ENCODE measurements at regions of chr19 and their contacts with region 1.

Region 1: DNA sequence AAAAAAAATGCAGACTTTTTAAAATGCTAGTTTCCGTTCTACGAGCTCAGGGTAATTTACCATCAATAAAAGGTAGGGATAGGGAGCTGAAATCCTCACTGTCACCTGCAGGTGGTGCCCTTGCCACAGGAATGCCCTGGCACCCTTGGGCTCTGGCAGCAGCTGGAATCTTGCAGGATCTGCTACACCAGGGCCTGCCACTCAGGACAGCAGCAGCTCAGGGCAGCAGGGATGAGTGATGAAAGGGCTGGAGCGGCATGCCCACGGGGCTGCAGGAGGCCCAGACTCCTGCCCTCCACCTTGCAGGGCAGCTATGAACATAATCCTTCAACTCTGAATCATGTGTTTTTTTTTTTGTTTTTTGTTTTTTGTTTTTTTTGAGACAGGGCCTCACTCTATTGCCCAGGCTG is 54.0 kb downstream of the GNG7 start:
- DNase-seq: peak; percentile 80
- H3K4me3 ChIP-seq: no peak overlapping the region
- H3K27ac ChIP-seq: no peak overlapping the region
- H3K4me1 ChIP-seq: no peaks in the 10 kb centered on the region
- H3K27me3 ChIP-seq: no peaks in the 10 kb centered on the region
- CTCF ChIP-seq: peak; percentile 71 to 84 (median 78)
- EP300 ChIP-seq: no peak
- POLR2A ChIP-seq: no peak

Region 2: DNA sequence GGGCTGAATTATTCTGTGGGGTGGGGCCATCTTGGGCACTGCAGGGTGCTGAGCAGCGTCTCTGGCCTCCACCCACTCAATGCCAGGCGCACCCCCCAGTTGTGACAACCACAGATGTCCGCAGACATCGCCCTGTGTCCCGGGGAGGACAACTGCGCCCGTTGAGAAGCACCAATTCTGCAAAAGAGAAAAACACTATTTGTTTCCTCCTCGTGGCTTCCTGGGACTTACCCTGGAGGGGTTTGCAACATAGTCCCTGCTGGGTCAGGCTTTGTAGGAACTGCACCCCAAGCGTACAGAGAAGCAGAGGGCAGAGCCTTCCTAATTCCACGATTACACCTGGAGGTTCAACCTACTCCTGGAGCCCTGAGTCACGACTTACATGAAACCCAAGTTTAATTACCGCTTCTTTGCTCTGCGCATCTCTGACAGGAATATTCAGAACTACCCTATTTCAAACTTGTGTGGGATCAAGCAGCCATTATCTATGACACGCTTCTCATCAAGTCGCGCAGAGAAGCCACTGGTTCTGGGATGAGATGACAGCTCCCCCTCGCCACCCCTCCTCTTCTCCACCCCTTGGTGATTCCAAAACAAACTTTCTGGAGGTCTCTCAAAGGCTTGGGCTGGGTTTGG is 102.4 kb after region 1 on chr19:
- intact Hi-C with region 1: loop called (anchors 1 kb)
- DNase-seq: no peak
- H3K4me3 ChIP-seq: no peak overlapping the region
- H3K27ac ChIP-seq: no peak overlapping the region
- H3K4me1 ChIP-seq: peaks cover 0 to 3% (median 0%) of the 10 kb centered on the region in 4 donors
- H3K27me3 ChIP-seq: no peaks in the 10 kb centered on the region
- CTCF ChIP-seq: no peak
- EP300 ChIP-seq: no peak
- POLR2A ChIP-seq: no peak

Measured in sigmoid colon (tissue), 7 donors.